ENCODE measurements at regions of chr9 and their contacts with region 1.

Region 1: DNA sequence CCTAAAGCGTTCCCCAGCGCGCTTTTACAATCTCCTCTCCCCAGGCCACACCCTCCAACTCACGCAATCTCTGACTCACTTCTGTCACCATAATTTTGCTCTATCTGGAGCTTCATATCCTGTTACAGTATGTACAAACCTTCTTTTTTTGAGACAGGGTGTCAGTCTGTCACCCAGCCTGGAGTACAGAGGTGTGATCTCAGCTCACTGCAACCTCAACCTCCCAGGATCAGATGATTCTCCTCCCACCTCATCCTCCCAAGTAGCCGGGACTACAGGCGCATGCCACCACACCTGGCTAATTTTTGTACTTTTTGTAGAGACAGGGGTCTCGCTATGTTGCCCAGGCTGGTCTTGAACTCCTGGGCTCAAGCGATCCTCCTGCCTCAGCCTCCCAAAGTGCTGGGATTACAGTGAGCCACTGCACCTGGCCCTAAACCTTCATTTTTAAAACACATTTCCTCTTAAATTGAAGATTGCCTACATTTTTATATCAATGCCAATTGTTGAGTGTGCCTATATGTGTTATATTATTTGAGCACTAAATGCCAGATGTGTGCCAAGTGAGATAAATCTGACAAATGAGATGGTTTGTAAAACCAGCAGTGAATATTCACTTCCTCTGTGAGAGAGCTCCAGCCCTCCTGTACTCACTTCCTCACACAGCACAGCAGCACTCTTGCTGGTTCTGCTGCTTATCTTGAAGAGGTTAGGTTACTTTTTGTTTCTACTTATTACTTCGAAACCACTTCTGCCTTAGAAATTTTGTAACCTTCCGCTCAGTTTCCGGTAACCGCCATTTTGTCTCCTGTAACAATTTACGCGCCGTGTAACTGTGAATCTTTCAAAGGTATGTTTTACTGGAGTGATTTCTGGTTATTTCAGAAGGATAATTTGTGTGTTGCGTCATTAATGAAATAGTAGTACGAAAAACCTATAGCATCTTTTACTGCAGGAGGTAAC is 57.9 kb downstream of the DOCK8 start:
- DNase-seq: peak; percentile 57
- ATAC-seq: peak; percentile 84
- H3K4me3 Mint-ChIP-seq: peak overlapping the region; percentile 85
- H3K27ac Mint-ChIP-seq: peak overlapping the region; percentile 96
- H3K4me1 Mint-ChIP-seq: peaks cover 51% of the 10 kb centered on the region
- H3K27me3 Mint-ChIP-seq: no peaks in the 10 kb centered on the region

Region 2: DNA sequence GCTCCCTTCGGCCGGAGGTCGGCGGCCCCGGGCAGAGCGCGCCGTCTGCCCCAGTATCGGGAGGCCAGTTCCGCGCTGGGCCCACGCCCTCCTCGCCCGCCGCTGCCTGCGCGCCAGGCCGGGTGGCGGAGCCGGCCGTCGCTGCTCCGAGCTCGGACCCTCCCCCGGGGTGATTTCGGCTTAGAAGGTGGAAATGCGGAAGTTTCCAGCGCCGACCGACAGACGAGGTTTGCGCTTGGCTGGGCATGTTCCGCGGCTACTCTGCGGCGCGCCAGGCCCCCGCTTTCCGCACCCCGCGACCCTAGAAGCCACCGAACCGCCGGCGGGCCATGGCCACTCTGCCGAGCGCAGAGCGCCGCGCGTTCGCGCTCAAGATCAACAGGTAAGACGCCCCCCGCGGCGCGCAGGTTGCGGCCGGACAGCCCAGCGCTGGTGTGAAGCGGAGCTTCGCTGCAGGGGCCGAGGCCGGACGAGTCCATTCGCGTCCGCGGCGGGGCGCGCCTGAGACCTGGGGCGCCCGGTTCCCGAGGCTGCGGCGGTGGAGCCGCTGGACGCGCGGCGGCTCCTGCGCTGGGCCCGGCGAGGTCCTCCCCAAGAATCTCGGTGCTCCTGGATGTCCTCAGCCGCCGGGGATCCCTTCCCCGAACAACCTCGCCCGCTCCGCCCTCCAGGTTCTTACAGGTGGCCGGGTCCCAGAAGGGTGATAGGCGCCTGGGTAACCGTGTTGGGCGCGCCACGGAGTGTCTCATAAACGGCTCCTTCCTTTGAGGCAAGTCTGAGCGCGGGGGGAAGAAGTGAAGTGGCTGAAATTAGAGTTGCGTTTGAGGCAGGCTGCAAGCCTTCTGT is 57.7 kb before region 1 on chr9 and contains the start of gene DOCK8:
- POLR2A ChIA-PET with region 1: interaction called, 129 read pairs
- DNase-seq: peak; percentile 85
- ATAC-seq: peak; percentile 82
- H3K4me3 Mint-ChIP-seq: peak within 1 kb of the TSS; percentile 87
- H3K27ac Mint-ChIP-seq: peak within 1 kb of the TSS; percentile 88
- H3K4me1 Mint-ChIP-seq: peaks cover 22% of the 10 kb centered on the region
- H3K27me3 Mint-ChIP-seq: no peaks in the 10 kb centered on the region
- total RNA-seq, gene DOCK8: 318 to 319 TPM

Region 3: GRCh38 chr9:224582-225520 is 47.7 kb before region 1 on chr9:
- POLR2A ChIA-PET with region 1: interaction called, 104 read pairs
- DNase-seq: no peak
- ATAC-seq: peak; percentile 51
- H3K4me3 Mint-ChIP-seq: no peak overlapping the region
- H3K27ac Mint-ChIP-seq: peak overlapping the region; percentile 62
- H3K4me1 Mint-ChIP-seq: peaks cover 28% of the 10 kb centered on the region
- H3K27me3 Mint-ChIP-seq: no peaks in the 10 kb centered on the region

Region 4: DNA sequence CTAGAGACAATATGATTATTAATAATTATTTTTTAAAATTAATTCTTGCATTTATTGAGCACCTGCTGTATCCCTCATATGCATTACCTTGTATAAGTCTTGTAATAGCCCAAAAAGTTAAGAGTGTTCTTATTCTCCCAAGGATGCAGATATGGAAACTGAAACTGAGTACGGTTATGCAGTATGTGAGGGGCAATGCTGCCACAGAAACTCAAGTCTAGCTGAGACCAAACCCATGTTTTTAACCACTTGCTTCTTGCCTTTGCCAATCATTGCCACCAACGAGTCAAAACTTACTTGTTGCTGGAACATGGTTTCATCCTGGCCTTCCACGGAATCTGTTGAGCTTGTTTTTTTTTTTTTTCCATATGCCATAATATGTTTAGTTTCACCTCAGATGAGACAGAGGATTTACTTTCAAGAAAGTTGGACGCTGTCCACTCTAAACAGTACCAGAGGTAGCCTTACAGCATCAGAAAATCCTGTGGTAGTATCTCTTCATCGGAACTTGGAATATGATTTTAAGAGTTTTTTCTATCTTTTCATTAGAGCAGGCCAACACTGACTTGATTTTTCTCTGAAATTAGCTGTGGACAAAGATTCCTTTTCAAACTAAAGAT is 30.0 kb before region 1 on chr9:
- POLR2A ChIA-PET with region 1: interaction called, 91 read pairs
- DNase-seq: no peak
- ATAC-seq: peak; percentile 69
- H3K4me3 Mint-ChIP-seq: peak overlapping the region; percentile 71
- H3K27ac Mint-ChIP-seq: peak overlapping the region; percentile 75
- H3K4me1 Mint-ChIP-seq: peaks cover 52% of the 10 kb centered on the region
- H3K27me3 Mint-ChIP-seq: no peaks in the 10 kb centered on the region

Region 5: DNA sequence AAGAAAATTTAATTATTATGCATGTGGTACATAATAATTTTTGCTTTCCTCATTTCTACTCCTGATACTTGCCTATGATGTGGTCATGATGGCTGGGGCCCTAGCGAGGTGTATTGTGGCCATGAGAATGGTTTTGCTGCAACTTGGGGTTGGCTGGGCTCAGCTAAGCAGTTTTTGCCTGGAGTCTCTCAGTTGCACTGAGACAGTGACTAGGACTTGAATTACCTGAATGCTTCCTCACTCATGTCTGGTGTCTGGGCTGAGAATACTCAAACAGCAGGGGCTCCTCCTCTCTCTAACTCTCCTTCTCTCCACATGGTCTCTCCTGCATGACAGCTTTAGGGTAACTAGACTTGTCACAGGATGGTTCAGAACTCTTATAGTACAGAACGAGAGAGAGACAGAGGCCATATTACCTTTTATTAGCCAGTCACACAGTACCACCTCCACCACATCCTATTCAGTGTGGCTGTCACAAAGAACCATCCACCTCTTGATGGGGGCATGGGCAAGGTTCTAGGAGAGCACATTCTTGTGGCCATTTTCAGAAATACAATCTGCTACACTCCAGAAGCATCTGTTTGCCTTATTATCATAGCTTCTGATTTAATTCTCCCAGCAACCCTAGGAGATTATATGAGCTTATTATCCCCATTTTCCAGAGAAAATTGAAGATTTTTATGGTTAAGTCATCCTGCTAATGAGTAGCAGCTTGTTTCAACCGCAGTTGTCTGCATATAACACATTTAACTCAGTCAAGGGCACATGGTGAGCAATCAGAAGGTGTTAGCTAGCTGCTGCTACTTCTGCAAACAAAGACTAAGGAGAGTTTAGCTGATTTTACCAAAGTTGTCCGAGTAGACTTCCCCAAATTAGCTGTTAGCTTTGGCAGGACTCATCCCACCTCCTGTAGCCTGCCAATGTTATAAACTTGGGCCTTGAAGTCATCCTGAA is 187.2 kb after region 1 on chr9:
- POLR2A ChIA-PET with region 1: no interaction called
- DNase-seq: peak; percentile 43
- ATAC-seq: peak; percentile 78
- H3K4me3 Mint-ChIP-seq: peak overlapping the region; percentile 64
- H3K27ac Mint-ChIP-seq: peak overlapping the region; percentile 83
- H3K4me1 Mint-ChIP-seq: peaks cover 38% of the 10 kb centered on the region
- H3K27me3 Mint-ChIP-seq: no peaks in the 10 kb centered on the region

Region 6: DNA sequence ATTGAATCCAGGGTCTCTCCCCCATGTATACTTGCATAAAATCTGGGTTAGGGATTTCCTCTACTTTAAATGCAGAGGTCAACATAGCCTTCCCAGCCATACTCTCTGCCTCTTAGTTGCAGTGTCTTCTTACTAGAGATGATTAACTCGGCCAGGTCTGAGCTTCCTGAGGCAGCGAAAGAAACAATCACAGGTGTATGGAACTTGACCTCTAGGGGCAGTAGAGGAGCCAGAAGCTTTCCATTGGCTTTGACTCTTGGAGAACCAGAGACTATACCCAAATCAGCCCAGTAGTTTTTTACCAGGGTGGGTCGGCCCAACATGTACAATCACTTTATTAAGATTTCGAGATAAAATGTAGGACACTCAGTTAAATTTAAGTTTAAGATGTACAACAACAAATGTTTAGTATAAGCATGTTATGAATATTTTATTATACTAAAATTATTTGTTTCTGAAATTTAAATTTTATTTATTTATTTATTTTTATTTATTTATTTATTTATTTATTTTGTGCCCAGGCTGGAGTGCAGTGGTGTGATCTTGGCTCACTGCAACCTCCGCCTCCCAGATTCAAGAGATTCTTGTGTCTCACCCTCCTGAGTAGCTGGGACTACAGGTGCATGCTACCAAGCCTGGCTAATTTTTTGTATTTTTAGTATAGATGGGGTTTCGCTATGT is 656.0 kb after region 1 on chr9:
- POLR2A ChIA-PET with region 1: no interaction called
- DNase-seq: no peak
- ATAC-seq: no peak
- H3K4me3 Mint-ChIP-seq: no peak overlapping the region
- H3K27ac Mint-ChIP-seq: no peak overlapping the region
- H3K4me1 Mint-ChIP-seq: no peaks in the 10 kb centered on the region
- H3K27me3 Mint-ChIP-seq: peaks cover 11% of the 10 kb centered on the region

Measured in activated naive CD8-positive, alpha-beta T cell treated with anti-CD3 and anti-CD28 coated beads, Interleukin-2, amount 10 ng/mL, durations not matched to agents 7 days and 5 days (primary cell).